Naive thymus-derived CD4-positive, alpha-beta T cell (primary cell): ENCODE measurements at regions of chr11 and their contacts with region 1.

Region 1: GRCh38 chr11:104792861-104793260 is 105.4 kb downstream of the CASP12 start:
- DNase-seq: no peak
- ATAC-seq: no peak
- H3K4me3 ChIP-seq: no peak overlapping the region
- H3K4me3 Mint-ChIP-seq: no peak overlapping the region
- H3K27ac ChIP-seq: no peak overlapping the region
- H3K27ac Mint-ChIP-seq: peak overlapping the region in 1 of 9 donors; percentile 68
- H3K4me1 ChIP-seq: no peaks in the 10 kb centered on the region
- H3K4me1 Mint-ChIP-seq: peaks cover 1 to 18% (median 8%) of the 10 kb centered on the region in 7 donors
- H3K27me3 ChIP-seq: no peaks in the 10 kb centered on the region
- H3K27me3 Mint-ChIP-seq: no peaks in the 10 kb centered on the region

Region 2: DNA sequence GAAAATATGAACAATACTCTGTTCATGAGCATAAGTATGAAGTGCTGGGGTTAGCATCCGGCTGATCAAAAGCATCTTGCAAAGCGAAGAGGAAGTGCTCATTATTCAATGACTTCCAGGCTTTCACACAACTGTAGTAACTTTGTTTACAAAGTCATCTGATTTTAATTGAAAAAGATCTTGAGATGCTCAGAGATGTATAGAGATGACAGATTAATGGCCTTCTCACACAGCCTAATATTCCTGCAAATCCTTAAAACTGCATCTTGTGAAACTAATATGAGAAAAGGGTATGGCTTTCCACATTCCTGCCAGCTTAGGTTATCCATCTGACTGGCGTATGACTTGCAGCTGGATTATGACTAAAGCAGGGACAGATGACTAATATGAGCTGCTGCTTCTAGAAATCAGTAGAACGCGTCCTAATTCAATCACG is 20.0 kb before region 1 on chr11:
- CTCF ChIA-PET with region 1: no interaction called
- POLR2A ChIA-PET with region 1: no interaction called
- intact Hi-C with region 1: loop called (anchors 2 kb)
- DNase-seq: peak in 6 of 9 donors; percentile 24 to 49 (median 32)
- ATAC-seq: peak; percentile 69
- H3K4me3 ChIP-seq: no peak overlapping the region
- H3K4me3 Mint-ChIP-seq: peak overlapping the region in 6 of 10 donors; percentile 15 to 59 (median 34)
- H3K27ac ChIP-seq: no peak overlapping the region
- H3K27ac Mint-ChIP-seq: peak overlapping the region in 6 of 9 donors; percentile 9 to 53 (median 16)
- H3K4me1 ChIP-seq: peaks cover 0 to 13% of the 10 kb centered on the region in 2 donors
- H3K4me1 Mint-ChIP-seq: peaks cover 3 to 24% (median 20%) of the 10 kb centered on the region in 7 donors
- H3K27me3 ChIP-seq: no peaks in the 10 kb centered on the region
- H3K27me3 Mint-ChIP-seq: peaks cover 0 to 3% (median 0%) of the 10 kb centered on the region in 5 donors